IMR-90 (cell line): ENCODE measurements at regions of chr10 and their contacts with region 1.

Region 1: GRCh38 chr10:9608602-9609001 is 1409.1 kb upstream of the CELF2 start:
- DNase-seq: peak; percentile 50
- ATAC-seq: peak; percentile 82
- H3K4me3 ChIP-seq: no peak overlapping the region
- H3K27ac ChIP-seq: no peak overlapping the region
- H3K4me1 ChIP-seq: 0 out of 2 replicates have a peak, but pooled peaks cover 1% of the 10 kb centered on the region
- H3K27me3 ChIP-seq: no peaks in the 10 kb centered on the region
- CTCF ChIP-seq: peak; percentile 82
- POLR2A ChIP-seq: no peak
- RAD21 ChIP-seq: peak; percentile 87

Region 2: DNA sequence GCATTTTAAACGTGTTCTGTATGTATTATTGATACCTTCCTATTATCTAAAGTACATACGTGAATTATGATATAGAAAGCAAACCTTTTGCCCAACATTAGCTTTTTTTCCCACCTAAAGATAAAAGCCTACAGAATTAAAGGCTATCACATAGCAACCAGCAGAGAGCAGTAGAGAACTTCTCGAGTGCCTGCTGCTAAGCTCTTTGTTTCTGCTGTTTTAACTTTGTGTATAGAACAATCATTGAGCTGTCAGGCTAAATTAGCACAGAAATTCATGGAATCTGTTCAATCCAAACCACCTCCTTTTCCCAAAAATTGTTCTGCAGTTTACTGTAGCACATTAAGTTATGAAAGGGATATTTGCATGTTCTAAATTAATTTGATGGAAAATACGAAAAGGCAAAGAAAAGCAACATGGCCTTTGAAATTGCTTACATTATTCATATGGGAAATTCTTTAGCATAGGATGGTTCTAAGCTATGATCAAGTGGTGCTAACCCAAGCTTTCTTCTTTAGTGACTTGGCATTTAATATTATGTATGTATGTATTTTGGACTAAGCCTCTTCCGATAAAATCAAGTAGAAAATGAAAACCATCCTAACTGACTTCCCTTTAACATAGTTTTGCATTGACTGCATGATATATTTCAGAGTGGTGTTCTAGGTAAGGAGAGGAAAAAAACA is 265.6 kb before region 1 on chr10:
- CTCF ChIA-PET with region 1: no interaction called
- POLR2A ChIA-PET with region 1: no interaction called
- dilution Hi-C with region 1: no loop called
- in situ Hi-C with region 1: no loop called
- intact Hi-C with region 1: loop called (anchors 5 kb)
- DNase-seq: peak; percentile 42
- ATAC-seq: peak; percentile 85
- H3K4me3 ChIP-seq: no peak overlapping the region
- H3K27ac ChIP-seq: no peak overlapping the region
- H3K4me1 ChIP-seq: no peaks in the 10 kb centered on the region
- H3K27me3 ChIP-seq: no peaks in the 10 kb centered on the region
- CTCF ChIP-seq: peak; percentile 71
- POLR2A ChIP-seq: no peak
- RAD21 ChIP-seq: peak; percentile 73

Region 3: DNA sequence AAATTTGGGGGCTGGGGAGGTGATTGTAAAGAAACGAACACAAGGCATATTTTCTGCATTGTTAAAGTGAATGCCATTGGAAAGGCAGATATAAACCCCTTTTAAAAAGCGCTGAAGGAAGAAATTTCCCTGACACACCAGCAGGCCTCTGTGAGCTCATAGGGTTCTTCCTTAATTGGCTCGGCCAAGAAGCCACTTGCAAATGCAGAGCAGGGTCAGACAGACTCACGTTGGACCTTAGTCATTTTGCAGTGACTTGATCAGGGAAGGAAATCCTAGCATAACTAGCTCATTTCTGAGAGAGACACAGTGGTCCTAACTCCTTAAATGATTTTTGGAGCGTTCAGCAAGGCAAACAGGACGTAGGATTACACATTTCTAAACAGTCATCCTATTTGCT is 92.7 kb before region 1 on chr10:
- CTCF ChIA-PET with region 1: no interaction called
- POLR2A ChIA-PET with region 1: no interaction called
- dilution Hi-C with region 1: no loop called
- in situ Hi-C with region 1: no loop called
- intact Hi-C with region 1: no loop called
- DNase-seq: no peak
- ATAC-seq: no peak
- H3K4me3 ChIP-seq: no peak overlapping the region
- H3K27ac ChIP-seq: no peak overlapping the region
- H3K4me1 ChIP-seq: no peaks in the 10 kb centered on the region
- H3K27me3 ChIP-seq: no peaks in the 10 kb centered on the region
- CTCF ChIP-seq: no peak
- POLR2A ChIP-seq: no peak
- RAD21 ChIP-seq: no peak

Region 4: GRCh38 chr10:9621216-9621615 is 12.6 kb after region 1 on chr10:
- CTCF ChIA-PET with region 1: interaction called, 10 read pairs
- POLR2A ChIA-PET with region 1: no interaction called
- dilution Hi-C with region 1: no loop called
- in situ Hi-C with region 1: no loop called
- intact Hi-C with region 1: no loop called
- DNase-seq: peak; percentile 73
- ATAC-seq: peak; percentile 62
- H3K4me3 ChIP-seq: no peak overlapping the region
- H3K27ac ChIP-seq: peak overlapping the region; percentile 49; the same call in 1 of the 2 replicates
- H3K4me1 ChIP-seq: peaks cover 3% of the 10 kb centered on the region; the same call in 1 of the 2 replicates
- H3K27me3 ChIP-seq: no peaks in the 10 kb centered on the region
- CTCF ChIP-seq: no peak
- POLR2A ChIP-seq: no peak
- RAD21 ChIP-seq: no peak

Region 5: DNA sequence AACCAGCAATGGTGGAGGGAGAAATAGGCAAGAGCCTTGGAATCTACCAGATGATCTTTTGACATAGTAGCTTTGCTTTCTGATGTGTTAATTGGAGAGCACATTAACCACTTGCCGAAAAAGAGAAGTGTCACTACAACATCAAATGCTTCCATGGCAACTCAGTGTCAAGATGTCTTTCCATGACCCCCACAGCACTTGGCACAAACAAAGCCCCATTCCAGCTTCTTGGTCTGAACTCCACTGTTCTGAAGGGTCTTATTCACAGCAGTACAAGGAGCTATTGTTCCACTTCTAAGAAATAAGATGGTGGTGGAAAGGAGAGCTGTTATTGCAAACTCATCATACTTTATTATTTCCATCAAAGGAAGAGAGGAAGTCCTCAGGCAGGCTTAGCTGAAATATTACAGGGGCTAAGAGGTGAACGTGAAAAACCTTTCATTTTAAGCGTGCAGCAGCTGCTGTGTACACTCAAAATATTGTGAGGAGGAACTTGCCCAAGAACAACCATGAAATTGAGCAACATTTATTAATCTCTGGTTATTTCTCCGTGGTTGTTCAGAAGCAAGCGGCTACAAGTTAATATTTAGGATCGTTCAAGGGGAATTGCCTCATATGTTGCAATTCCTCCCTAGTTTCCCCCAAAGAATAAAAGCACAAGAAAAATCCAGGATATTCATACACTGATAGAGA is 1054.3 kb after region 1 on chr10:
- CTCF ChIA-PET with region 1: no interaction called
- POLR2A ChIA-PET with region 1: no interaction called
- dilution Hi-C with region 1: no loop called
- in situ Hi-C with region 1: no loop called
- intact Hi-C with region 1: loop called (anchors 5 kb)
- DNase-seq: no peak
- ATAC-seq: no peak
- H3K4me3 ChIP-seq: no peak overlapping the region
- H3K27ac ChIP-seq: no peak overlapping the region
- H3K4me1 ChIP-seq: peaks cover 9% of the 10 kb centered on the region
- H3K27me3 ChIP-seq: no peaks in the 10 kb centered on the region
- CTCF ChIP-seq: no peak
- POLR2A ChIP-seq: no peak
- RAD21 ChIP-seq: no peak

Region 6: GRCh38 chr10:10792681-10793080 is 1184.1 kb after region 1 on chr10:
- CTCF ChIA-PET with region 1: no interaction called
- POLR2A ChIA-PET with region 1: no interaction called
- dilution Hi-C with region 1: no loop called
- in situ Hi-C with region 1: no loop called
- intact Hi-C with region 1: loop called (anchors 10 kb)
- DNase-seq: peak; percentile 86
- ATAC-seq: peak; percentile 86
- H3K4me3 ChIP-seq: no peak overlapping the region
- H3K27ac ChIP-seq: peak overlapping the region; percentile 53
- H3K4me1 ChIP-seq: peaks cover 15% of the 10 kb centered on the region
- H3K27me3 ChIP-seq: no peaks in the 10 kb centered on the region
- CTCF ChIP-seq: no peak
- POLR2A ChIP-seq: no peak
- RAD21 ChIP-seq: no peak

Region 7: GRCh38 chr10:11036407-11037011 is 1427.9 kb after region 1 on chr10:
- CTCF ChIA-PET with region 1: interaction called, 8 read pairs
- POLR2A ChIA-PET with region 1: no interaction called
- dilution Hi-C with region 1: no loop called
- in situ Hi-C with region 1: loop called (anchors 10 kb)
- intact Hi-C with region 1: loop called (anchors 1 kb)
- DNase-seq: peak; percentile 62
- ATAC-seq: peak; percentile 86
- H3K4me3 ChIP-seq: no peak overlapping the region
- H3K27ac ChIP-seq: no peak overlapping the region
- H3K4me1 ChIP-seq: no peaks in the 10 kb centered on the region
- H3K27me3 ChIP-seq: peaks cover 2% of the 10 kb centered on the region; the same call in 1 of the 2 replicates
- CTCF ChIP-seq: peak; percentile 71
- POLR2A ChIP-seq: no peak
- RAD21 ChIP-seq: peak; percentile 85

Region 8: DNA sequence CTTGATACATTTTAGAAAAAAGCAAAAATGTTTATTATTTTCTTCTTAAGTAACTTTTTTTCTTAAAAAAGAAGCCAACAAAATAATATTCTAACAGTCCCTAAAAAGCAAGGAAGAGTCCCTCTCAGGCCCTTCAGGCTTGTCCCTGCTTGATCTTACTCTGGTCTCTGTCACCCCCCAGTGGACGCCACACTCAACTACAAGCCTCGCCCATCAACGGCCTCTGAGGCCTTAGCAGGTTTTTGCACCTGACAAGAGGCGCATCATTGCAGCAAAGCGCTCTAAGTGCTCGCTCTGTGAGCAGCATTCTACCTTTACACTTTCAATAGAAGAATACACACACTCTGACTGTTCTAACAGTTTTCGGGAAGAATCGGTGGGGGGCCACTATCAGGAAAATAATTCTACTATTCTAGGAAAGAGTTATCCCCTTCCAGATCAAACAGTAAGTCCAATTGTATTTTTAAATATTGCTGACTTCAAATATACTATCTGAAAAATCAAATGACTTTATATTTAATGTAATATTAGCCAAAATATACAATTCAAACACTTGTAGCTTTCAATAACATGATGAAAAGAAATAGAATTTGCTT is 1863.7 kb after region 1 on chr10:
- CTCF ChIA-PET with region 1: no interaction called
- POLR2A ChIA-PET with region 1: no interaction called
- dilution Hi-C with region 1: no loop called
- in situ Hi-C with region 1: no loop called
- intact Hi-C with region 1: loop called (anchors 2 kb)
- DNase-seq: peak; percentile 41
- ATAC-seq: peak; percentile 90
- H3K4me3 ChIP-seq: no peak overlapping the region
- H3K27ac ChIP-seq: no peak overlapping the region
- H3K4me1 ChIP-seq: peaks cover 3% of the 10 kb centered on the region
- H3K27me3 ChIP-seq: no peaks in the 10 kb centered on the region
- CTCF ChIP-seq: peak; percentile 58
- POLR2A ChIP-seq: no peak
- RAD21 ChIP-seq: peak; percentile 75